SK-N-SH (cell line): ENCODE measurements at regions of chr3 and their contacts with region 1.

Region 1: GRCh38 chr3:14791343-14791945 is 27.3 kb upstream of the FGD5 start:
- DNase-seq: peak; percentile 85
- H3K4me3 ChIP-seq: no peak overlapping the region
- H3K27ac ChIP-seq: no peak overlapping the region
- H3K4me1 ChIP-seq: peaks cover 0 to 4% of the 10 kb centered on the region in 2 experiments; a peak in 1 of 4 replicates
- H3K27me3 ChIP-seq: no peaks in the 10 kb centered on the region
- CTCF ChIP-seq: peak; percentile 60
- EP300 ChIP-seq: no peak
- RAD21 ChIP-seq: peak; percentile 88

Region 2: GRCh38 chr3:14672588-14672987 is 118.9 kb before region 1 on chr3:
- CTCF ChIA-PET with region 1: interaction called, 22 read pairs
- POLR2A ChIA-PET with region 1: no interaction called
- DNase-seq: no peak
- H3K4me3 ChIP-seq: no peak overlapping the region
- H3K27ac ChIP-seq: no peak overlapping the region
- H3K4me1 ChIP-seq: peaks cover 0 to 11% of the 10 kb centered on the region in 2 experiments; a peak in 2 of 4 replicates
- H3K27me3 ChIP-seq: no peaks in the 10 kb centered on the region
- CTCF ChIP-seq: no peak
- EP300 ChIP-seq: no peak
- RAD21 ChIP-seq: no peak

Region 3: DNA sequence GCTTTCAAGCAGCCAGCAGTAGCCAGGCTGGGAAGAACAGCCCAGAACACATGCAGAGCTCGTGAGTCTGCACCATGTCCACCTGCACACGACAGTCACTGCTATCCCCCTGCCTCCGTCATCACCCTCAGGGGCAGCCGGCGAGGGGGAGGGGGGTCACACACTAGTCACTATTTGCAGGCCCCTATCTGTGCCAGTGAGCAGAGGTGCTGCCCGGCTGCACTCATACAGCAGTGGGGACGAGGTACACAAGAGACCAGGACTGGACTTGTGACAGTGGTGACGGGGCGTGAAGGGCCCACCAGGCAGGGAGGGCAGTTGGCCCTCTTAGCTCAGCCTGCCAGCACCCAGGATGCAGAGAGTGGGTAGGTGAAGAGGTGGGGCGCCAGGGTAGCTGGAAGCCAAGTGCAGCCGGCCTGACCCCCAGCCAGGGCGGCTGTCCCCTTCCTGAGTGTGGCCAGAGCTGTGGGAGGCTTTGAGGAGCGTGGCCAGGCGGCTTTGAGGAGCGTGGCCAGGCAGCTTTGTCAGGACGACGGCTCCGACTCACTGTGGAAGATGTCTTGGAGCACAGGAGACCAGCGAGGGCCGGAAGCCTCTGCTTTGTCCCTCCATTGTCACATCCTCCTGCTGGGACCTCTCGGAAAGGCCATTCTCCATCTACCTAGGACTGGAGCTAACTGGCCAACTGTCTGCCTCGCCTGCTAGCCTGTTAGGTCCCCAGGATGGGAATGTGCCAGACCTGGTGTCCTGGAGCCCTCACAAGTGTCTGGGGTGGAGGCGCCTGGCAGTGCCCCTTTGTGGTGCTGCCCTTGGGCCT is 24.8 kb before region 1 on chr3:
- CTCF ChIA-PET with region 1: interaction called, 10 read pairs
- POLR2A ChIA-PET with region 1: no interaction called
- DNase-seq: no peak
- H3K4me3 ChIP-seq: no peak overlapping the region
- H3K27ac ChIP-seq: no peak overlapping the region
- H3K4me1 ChIP-seq: peaks cover 0 to 6% of the 10 kb centered on the region in 2 experiments; a peak in 1 of 4 replicates
- H3K27me3 ChIP-seq: no peaks in the 10 kb centered on the region
- CTCF ChIP-seq: no peak
- EP300 ChIP-seq: no peak
- RAD21 ChIP-seq: no peak

Region 4: DNA sequence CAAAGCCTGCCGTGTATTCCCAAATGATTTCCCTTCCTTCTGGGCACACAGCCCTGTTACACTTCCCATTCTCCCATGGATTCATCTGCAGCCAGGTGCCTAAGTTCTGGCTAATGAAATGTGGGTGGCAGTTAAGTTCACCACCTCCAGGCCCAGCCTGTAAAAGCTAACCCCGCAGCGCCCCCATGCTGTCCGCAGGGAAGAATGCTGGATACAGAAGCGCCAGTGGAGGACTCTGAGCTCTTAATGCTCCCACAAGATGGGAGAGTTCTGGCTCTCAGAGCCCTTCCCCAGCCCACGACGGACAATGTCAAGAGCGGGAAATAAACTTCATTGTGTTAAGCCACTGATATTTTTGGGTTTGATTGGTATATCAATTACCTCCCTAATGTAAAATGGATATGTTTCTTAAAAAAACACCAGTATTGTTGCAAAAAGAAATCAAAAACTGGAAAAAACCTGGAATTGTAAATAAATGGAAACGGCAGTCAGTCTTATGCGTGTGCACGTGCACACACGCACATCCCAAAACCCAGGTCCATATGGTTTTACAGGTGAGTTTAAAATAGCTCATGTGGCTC is 10.4 kb before region 1 on chr3:
- CTCF ChIA-PET with region 1: interaction called, 10 read pairs
- POLR2A ChIA-PET with region 1: no interaction called
- DNase-seq: no peak
- H3K4me3 ChIP-seq: no peak overlapping the region; a peak in 1 of 4 replicates
- H3K27ac ChIP-seq: no peak overlapping the region
- H3K4me1 ChIP-seq: peaks cover 0 to 15% of the 10 kb centered on the region in 2 experiments; a peak in 1 of 4 replicates
- H3K27me3 ChIP-seq: no peaks in the 10 kb centered on the region
- CTCF ChIP-seq: peak; percentile 34; the same call in 1 of the 2 replicates
- EP300 ChIP-seq: no peak
- RAD21 ChIP-seq: peak; percentile 70

Region 5: DNA sequence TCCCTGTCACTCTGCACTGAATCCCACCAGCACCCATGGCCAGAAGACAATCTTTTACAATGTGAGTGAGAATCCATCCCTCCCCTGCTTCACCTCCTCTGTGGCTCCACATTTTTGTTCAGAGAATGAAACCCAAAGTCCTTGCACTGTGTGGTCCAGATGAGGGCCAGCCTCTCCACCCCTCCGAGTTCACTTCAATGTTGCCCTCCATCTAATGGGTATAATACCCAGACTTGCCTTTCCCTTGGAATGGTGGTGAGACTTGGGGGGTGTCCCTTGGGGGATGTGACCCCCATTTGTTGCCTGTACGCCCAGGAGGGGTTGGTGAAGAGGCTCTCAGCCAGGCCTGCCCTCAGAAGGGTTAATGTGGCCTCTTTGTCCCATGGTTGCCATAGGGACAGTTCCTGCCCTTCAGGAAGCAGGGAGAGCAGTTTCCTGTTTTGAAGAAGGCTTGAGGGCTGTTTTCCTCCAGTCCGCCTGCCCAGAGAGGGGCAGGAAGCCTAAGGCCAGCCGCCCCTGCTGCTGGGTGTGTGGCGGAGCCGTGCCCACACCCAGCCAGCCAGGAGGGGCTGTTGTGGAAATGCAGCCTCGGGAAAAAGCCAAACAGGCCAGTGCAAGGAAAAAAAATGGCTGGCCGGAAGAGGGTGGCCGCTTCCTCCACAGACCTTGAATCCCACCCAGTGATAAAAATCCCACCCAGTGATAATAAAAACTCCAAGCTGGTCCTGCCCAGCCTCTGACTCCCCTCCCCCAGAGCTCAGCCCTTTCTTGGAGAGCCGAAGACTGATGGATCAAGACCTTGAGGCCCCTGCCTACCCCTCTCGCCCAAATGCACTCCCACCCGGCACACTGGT is 12.8 kb after region 1 on chr3:
- CTCF ChIA-PET with region 1: interaction called, 12 read pairs
- POLR2A ChIA-PET with region 1: no interaction called
- DNase-seq: peak; percentile 48
- H3K4me3 ChIP-seq: no peak overlapping the region
- H3K27ac ChIP-seq: no peak overlapping the region
- H3K4me1 ChIP-seq: peaks cover 0 to 3% of the 10 kb centered on the region in 2 experiments; a peak in 1 of 4 replicates
- H3K27me3 ChIP-seq: no peaks in the 10 kb centered on the region
- CTCF ChIP-seq: no peak
- EP300 ChIP-seq: no peak
- RAD21 ChIP-seq: no peak